Mammary epithelial cell (primary cell): ENCODE measurements at regions of chr12 and their contacts with region 1.

Region 1: DNA sequence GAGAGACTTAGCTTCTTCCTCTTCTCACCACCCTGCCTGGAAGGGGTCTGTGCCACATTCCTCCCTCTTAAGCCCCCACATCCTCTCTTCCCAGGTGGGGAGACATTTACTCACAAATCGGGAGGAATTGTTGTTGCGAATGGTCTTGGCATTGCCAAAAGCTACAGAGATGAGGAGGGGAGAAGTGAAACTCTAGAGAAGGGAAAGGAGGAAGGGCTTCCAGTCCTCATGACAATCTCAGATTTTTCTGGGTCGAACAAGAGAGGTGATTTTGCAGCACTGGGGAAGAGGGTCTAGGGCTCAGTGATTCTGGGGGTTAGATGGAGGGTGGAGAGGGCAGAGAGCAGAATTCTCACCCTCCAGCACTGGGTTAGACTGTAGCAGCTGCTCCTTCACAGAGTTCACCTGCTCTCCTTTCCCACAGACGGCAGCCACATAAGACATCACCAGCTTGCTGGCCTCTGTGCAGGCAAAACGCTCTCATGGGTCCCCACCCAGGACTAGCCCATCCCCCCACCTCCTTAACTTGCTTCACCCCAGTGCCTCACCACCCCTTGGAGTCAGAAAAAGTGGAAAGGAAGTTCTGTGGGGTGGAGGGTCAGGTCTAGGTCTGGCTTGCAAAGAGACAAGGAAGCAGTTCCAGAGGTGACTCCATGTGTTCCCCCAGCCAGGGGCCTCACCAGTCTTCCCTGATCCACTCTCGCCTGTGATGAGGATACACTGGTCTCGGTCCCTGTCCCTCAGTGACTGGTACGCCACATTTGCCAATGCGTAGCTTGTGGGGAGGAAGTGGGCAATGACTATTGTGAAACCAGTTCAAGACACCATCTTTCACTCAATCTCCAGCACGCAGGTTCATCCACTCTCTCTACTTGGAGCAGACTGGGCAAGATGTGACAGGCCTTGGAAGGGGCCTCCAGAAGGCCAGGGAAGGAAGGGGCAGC is 2.7 kb downstream of the MYO1A start:
- DNase-seq: no peak
- H3K4me3 ChIP-seq: no peak overlapping the region
- H3K27ac ChIP-seq: no peak overlapping the region
- H3K4me1 ChIP-seq: no peaks in the 10 kb centered on the region
- H3K27me3 ChIP-seq: no peaks in the 10 kb centered on the region
- CTCF ChIP-seq: no peak

Region 2: GRCh38 chr12:56670836-56671235 is 376.4 kb before region 1 on chr12:
- CTCF ChIA-PET with region 1: no interaction called
- dilution Hi-C with region 1: no loop called
- in situ Hi-C with region 1: no loop called
- intact Hi-C with region 1: no loop called
- DNase-seq: no peak
- H3K4me3 ChIP-seq: no peak overlapping the region
- H3K27ac ChIP-seq: peak overlapping the region; percentile 5
- H3K4me1 ChIP-seq: peaks cover 12% of the 10 kb centered on the region
- H3K27me3 ChIP-seq: no peaks in the 10 kb centered on the region
- CTCF ChIP-seq: no peak

Region 3: DNA sequence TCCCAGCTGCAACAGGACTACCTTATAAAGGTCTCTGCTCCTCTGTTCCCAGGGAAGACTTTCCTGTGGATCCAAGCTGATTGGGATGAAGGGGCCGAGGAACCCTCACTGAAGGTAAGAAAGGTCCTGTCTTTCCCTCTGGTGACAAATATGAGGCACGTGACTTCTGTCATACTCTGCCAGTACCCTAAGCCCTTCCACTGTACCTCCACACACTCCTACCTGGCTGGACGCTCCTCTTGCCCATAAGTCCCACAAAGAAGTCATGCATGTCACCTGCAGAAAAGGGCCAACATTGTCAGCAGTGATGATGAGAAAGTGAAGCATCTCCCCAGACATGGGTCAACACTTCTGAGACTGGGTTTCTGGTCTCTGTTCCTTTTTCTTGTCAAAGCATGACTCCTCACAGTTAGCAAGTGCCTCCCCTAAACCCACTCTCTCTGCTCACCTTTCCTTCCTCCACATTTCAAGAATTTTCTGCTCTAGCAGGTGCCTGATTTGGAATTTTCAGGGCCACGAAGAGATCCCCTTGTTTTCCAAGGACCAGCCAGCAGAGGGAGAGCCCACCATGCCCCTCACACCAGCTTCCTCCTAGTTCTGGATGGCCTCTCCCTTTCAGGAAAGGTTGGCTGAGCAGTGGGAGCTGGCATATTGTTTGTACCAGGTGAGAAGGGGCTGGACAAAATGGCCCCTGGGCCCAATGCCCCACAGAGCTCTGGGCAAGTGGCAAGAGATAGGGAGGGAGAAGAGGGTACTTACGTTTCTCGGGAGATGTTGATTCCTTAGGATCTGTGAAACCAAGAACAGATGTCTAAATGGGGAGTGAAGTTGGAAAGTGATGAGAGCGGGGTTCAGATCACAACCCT is 34.4 kb before region 1 on chr12:
- CTCF ChIA-PET with region 1: no interaction called
- dilution Hi-C with region 1: no loop called
- in situ Hi-C with region 1: loop called in 1 of 2 experiments (anchors 5 kb)
- intact Hi-C with region 1: no loop called
- DNase-seq: no peak
- H3K4me3 ChIP-seq: no peak overlapping the region
- H3K27ac ChIP-seq: no peak overlapping the region
- H3K4me1 ChIP-seq: no peaks in the 10 kb centered on the region
- H3K27me3 ChIP-seq: no peaks in the 10 kb centered on the region
- CTCF ChIP-seq: no peak

Region 4: DNA sequence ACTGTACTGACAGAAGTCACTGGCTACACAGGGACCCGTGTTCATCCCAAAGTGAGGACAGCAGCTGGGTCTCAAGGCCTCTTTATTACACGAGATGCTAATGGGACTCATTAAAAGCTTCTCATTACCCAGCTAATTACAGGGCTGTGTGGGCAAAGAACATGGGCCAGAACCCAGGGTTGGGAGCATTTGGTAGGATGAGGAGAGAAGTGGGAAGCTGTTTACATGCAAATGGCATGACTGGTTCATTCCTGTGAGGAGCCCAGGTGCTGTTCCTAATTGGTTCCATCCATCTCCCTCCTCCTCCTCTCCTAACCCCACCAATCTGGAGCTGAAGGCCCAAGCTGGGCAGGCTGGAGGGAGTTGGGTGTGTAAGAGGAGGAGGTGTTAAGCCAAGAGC is 22.0 kb before region 1 on chr12:
- CTCF ChIA-PET with region 1: no interaction called
- dilution Hi-C with region 1: no loop called
- in situ Hi-C with region 1: no loop called
- intact Hi-C with region 1: loop called (anchors 2 kb)
- DNase-seq: no peak
- H3K4me3 ChIP-seq: no peak overlapping the region
- H3K27ac ChIP-seq: no peak overlapping the region
- H3K4me1 ChIP-seq: no peaks in the 10 kb centered on the region
- H3K27me3 ChIP-seq: no peaks in the 10 kb centered on the region
- CTCF ChIP-seq: no peak